T-cell (primary cell): ENCODE measurements at regions of chr12 and their contacts with region 1.

Region 1: GRCh38 chr12:62581288-62582064 is 114.8 kb downstream of the MON2 start:
- DNase-seq: peak in 1 of 35 experiments; percentile 66
- ATAC-seq: peak in 3 of 4 experiments; percentile 50 to 61 (median 52)
- H3K4me3 ChIP-seq: no peak overlapping the region
- H3K4me3 Mint-ChIP-seq: no peak overlapping the region
- H3K27ac ChIP-seq: no peak overlapping the region
- H3K27ac Mint-ChIP-seq: no peak overlapping the region
- H3K4me1 ChIP-seq: no peaks in the 10 kb centered on the region
- H3K4me1 Mint-ChIP-seq: peaks cover 0 to 6% (median 0%) of the 10 kb centered on the region in 3 donors
- H3K27me3 ChIP-seq: no peaks in the 10 kb centered on the region
- H3K27me3 Mint-ChIP-seq: no peaks in the 10 kb centered on the region

Region 2: GRCh38 chr12:62793256-62794217 is 212.1 kb after region 1 on chr12:
- CTCF ChIA-PET with region 1: interaction called, 23 to 66 read pairs
- POLR2A ChIA-PET with region 1: no interaction called
- DNase-seq: peak; percentile 11 to 79 (median 63)
- ATAC-seq: peak; percentile 41 to 69 (median 57)
- H3K4me3 ChIP-seq: no peak overlapping the region
- H3K4me3 Mint-ChIP-seq: no peak overlapping the region
- H3K27ac ChIP-seq: no peak overlapping the region
- H3K27ac Mint-ChIP-seq: no peak overlapping the region
- H3K4me1 ChIP-seq: no peaks in the 10 kb centered on the region
- H3K4me1 Mint-ChIP-seq: no peaks in the 10 kb centered on the region
- H3K27me3 ChIP-seq: peaks cover 0 to 3% of the 10 kb centered on the region in 2 experiments
- H3K27me3 Mint-ChIP-seq: peaks cover 9 to 10% of the 10 kb centered on the region in 2 donors

Region 3: DNA sequence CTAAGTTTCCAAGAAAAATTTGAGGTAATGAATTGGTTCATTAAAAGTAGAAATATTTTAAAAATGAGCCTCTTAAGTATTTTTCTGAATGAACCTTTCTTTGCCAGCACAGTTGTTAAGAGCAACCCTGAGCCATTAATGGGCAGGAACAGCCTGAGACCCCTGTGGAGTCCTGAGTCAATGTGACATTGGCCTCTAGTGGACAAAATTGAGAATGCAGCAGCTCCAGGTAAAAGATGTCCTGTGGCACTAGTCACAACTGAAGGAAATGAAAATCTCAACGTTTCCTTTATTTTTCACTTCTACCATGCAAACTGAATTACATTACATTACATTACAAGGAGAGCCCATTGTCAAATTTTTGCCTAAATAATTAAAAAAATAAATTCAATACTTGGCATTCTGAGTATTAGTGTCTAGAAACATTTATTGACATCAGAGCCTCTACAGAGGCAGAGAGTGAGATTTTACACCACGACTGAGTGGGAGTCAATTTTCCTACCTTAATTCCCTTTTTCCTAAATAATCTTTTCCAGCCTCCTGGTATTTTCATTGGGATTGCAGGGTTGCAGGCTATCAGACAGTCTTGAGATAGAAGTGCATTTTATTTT is 217.8 kb after region 1 on chr12:
- CTCF ChIA-PET with region 1: interaction called, 23 to 66 read pairs
- POLR2A ChIA-PET with region 1: no interaction called
- DNase-seq: peak in 27 of 35 experiments; percentile 7 to 75 (median 36)
- ATAC-seq: peak; percentile 58 to 77 (median 72)
- H3K4me3 ChIP-seq: no peak overlapping the region
- H3K4me3 Mint-ChIP-seq: no peak overlapping the region
- H3K27ac ChIP-seq: no peak overlapping the region
- H3K27ac Mint-ChIP-seq: no peak overlapping the region
- H3K4me1 ChIP-seq: no peaks in the 10 kb centered on the region
- H3K4me1 Mint-ChIP-seq: no peaks in the 10 kb centered on the region
- H3K27me3 ChIP-seq: peaks cover 0 to 7% of the 10 kb centered on the region in 2 experiments
- H3K27me3 Mint-ChIP-seq: peaks cover 7 to 10% of the 10 kb centered on the region in 2 donors